HAP-1 (cell line): ENCODE measurements at regions of chr5 and their contacts with region 1.

Region 1: DNA sequence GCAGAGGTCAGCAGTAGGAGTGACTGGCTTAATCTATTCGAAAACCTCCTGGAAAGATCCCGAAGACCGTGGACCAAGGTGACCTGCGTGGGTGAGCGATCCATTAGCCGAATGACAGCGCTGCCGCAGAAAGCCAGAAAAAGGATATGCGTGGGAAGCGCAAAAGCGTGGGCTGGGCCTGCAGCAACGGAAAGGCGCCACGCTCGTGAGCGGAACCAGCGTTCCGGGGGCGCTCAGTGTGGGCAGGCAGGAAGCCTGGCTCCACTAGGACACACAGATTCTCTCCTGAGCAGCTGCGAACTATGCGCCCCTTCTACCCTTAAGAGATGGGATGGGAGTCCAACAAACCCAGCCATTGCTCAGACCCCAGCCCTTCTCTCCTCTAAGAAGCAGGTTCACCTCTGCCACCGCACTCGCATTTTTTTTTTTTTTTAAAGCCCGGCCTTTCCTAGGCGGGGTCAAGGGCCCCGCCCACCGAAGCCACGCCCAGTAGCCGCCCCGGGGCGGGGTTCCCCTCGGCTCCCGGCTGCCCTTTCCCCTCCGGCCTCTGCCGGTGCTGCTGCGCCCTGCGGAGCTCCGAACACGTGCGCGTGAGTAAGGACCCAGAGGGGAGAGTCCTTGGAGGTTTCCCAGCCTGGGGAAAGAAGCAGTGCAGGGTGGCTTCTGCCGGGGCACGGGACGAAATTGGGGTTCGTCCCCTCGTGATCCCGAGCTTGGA is 19.8 kb upstream of the MATR3 start:
- DNase-seq: peak; percentile 80 to 90
- H3K4me3 ChIP-seq: peak overlapping the region; percentile 63
- H3K4me1 ChIP-seq: peaks cover 59% of the 10 kb centered on the region
- H3K27me3 ChIP-seq: no peaks in the 10 kb centered on the region

Region 2: DNA sequence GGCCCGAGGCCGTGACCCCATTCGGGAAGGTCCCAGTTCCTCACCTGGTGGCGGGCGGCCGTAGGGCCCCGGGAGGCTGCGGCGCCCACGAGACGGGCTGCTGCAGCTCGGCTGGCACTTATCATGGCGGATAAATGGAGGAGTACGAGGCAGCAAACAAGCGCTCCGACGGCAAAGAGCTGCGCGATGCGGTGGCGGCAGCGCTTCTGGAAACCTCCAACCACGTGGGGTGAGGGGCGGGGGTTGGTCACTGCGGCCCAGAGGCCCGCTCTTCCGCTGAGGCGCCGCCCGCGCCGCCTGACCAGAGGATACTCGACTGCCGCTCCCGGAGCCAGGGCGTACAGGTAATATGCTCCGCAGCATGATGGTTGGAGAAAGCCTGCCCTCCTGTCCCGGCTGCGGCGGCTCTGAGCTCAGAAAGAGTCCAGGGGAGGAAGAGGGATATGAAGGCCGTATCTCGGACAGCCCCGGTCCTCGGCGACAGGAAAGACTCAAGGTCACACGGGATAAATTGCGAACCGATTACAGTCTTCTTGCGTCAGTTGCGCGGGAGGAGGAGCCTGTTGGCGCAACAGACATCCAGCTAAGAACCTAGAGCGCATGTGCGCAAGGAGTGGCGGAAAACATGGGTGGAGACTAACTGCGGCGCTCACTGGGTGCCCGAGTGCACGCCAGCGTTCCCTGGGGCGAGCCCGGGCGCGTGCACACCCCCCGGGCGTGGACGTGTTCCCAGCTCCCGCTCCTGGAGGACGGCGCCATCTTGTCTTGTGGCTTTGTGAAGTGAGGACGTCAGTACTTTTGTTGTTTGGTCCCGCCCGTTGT is 698.3 kb before region 1 on chr5 and contains the start of gene HSPA9:
- in situ Hi-C with region 1: loop called (anchors 10 kb)
- DNase-seq: peak; percentile 98 to 99
- H3K4me3 ChIP-seq: peak within 1 kb of the TSS; percentile 94
- H3K4me1 ChIP-seq: peaks cover 10% of the 10 kb centered on the region
- H3K27me3 ChIP-seq: no peaks in the 10 kb centered on the region

Region 3: DNA sequence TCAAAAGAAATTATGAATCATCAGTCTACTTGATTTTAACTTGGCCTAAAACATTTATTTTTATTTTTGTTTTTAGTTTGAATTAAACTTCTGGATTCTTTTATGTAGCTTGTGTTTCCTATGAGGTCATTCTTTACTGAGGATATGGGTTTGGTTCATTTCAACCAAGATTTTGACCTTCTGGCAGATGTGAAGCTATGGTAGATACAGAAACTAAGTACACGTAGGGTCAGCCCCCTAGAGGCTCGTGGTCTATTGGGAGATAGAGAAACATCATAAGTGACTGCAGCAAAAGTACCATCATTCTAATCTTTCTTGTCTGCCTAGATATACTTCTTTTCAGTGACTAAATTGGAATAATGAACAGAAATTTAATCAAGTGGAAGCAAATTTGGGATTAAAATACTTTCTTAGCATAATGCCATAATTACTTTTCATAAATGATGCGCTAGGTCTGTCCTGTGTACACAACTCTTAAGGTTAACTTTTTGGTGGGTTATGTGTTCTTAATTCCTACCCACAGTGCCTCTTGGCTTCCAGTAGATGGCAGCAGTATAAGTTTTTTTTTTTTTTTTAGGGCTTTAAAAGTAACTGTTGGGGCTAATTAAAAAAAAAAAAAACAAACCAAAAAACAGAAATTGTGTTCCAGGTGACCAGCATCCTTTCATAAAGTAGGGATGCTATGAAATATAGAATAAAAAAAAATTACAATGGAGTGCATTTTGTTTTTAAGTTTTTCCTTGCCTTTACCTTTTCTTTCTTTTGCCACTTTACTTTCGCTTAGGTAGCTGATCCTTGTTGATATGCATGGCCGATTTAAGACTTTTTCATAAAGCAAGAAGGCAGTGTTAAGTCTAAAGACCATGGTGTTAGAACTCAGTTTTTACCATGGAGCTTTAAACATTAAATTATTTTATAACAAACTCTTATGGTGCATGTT is 448.5 kb before region 1 on chr5:
- in situ Hi-C with region 1: loop called (anchors 25 kb)
- DNase-seq: no peak
- H3K4me3 ChIP-seq: no peak overlapping the region
- H3K4me1 ChIP-seq: peaks cover 23% of the 10 kb centered on the region
- H3K27me3 ChIP-seq: no peaks in the 10 kb centered on the region